Activated CD8-positive, alpha-beta memory T cell treated with anti-CD3 and anti-CD28 coated beads, Interleukin-2, amount 10 ng/mL, durations not matched to agents 7 days and 5 days (primary cell): ENCODE measurements at regions of chr11 and their contacts with region 1.

Region 1: DNA sequence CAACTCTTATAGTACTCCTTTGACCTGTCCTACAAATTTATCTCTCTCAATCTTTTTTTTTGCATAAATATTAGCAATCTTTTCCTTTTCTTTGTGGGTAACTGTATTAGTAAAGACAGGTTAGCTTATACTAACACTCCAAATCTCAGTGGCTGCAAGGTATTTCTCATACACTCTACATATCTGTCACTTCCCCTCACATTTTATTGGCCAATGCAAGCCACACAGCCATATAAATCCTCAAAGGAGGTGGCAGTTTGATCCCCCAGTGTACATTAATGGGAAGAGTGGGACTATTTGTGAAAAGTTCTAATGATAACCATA is 42.6 kb upstream of the EED start:
- DNase-seq: peak; percentile 57
- ATAC-seq: peak; percentile 81
- H3K4me3 Mint-ChIP-seq: no peak overlapping the region
- H3K27ac Mint-ChIP-seq: no peak overlapping the region
- H3K4me1 Mint-ChIP-seq: peaks cover under 1% of the 10 kb centered on the region
- H3K27me3 Mint-ChIP-seq: no peaks in the 10 kb centered on the region

Region 2: GRCh38 chr11:86134580-86135318 is 67.2 kb before region 1 on chr11:
- CTCF ChIA-PET with region 1: no interaction called
- DNase-seq: no peak
- ATAC-seq: no peak
- H3K4me3 Mint-ChIP-seq: no peak overlapping the region
- H3K27ac Mint-ChIP-seq: no peak overlapping the region
- H3K4me1 Mint-ChIP-seq: peaks cover 24% of the 10 kb centered on the region
- H3K27me3 Mint-ChIP-seq: no peaks in the 10 kb centered on the region

Region 3: DNA sequence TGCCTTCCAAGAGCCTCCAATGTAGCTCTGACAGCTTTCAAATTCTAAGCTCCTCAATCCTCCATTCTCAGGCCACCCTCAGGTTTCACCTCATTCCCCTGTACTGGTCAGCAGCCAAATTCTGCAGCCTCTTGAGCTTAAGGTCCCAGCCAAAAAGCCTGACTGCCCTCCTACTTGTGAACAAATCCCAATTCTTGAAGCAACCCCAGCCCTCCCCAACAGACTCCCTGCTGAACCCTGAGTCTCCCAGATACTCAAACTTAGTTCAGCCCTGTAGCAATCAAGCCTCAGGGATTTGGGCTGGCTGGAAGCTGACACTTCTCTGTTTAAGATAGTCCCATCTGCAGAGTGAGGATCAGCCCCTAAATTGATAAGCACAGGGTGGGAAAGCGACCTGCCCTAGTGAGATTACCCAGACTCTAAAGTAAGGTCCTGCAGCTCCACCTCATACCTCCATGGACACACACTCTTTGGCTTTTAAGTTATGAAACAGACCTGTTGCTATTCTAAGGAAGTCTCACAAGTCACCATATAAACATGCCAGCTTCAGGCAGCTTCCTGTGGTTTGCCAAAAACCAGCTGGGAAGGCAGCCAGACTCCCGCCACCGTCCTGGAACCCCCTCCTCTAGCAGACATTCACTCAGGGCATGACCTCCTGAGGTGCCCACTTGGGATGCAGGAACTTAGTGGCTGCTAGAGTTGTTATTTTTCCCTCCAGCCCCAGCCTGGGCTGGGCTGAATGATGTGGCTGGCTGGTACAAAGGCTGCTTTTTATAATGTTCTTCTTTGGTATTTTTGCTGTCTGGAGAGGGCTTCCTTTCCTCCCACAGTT is 50.6 kb before region 1 on chr11:
- CTCF ChIA-PET with region 1: no interaction called
- DNase-seq: no peak
- ATAC-seq: peak; percentile 63
- H3K4me3 Mint-ChIP-seq: no peak overlapping the region
- H3K27ac Mint-ChIP-seq: peak overlapping the region; percentile 61
- H3K4me1 Mint-ChIP-seq: peaks cover 33% of the 10 kb centered on the region
- H3K27me3 Mint-ChIP-seq: no peaks in the 10 kb centered on the region

Region 4: GRCh38 chr11:86218125-86219084 is 16.4 kb after region 1 on chr11:
- CTCF ChIA-PET with region 1: interaction called, 16 read pairs
- DNase-seq: peak; percentile 77
- ATAC-seq: peak; percentile 87
- H3K4me3 Mint-ChIP-seq: peak overlapping the region; percentile 61
- H3K27ac Mint-ChIP-seq: peak overlapping the region; percentile 61
- H3K4me1 Mint-ChIP-seq: peaks cover 35% of the 10 kb centered on the region
- H3K27me3 Mint-ChIP-seq: no peaks in the 10 kb centered on the region

Region 5: DNA sequence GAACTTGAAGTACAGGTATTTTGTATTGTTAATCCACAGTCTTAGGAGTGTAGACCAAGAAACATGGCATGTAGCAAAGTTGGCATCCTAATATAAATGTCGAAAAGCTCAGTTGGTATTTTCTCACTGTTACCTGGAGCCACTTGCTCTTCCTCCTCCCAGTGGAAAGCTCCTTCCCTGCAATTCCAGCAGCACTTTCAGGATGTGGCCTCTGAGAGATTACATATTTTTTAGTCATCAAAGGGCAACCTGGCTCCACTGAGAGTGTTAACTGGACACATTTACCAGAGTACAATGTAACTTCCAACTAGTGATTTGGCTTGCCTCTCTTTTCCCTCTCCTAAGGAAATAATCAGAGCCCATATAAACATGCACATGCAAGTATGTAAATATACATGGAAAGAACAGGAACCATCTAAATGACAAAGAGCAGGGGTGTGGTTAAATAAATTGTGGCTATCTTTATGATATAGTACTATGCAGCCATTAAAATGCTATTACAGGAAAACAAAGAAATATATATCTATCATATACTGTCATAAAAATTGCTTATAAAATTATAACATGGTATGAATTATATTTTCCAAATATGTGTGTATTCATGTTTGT is 28.3 kb after region 1 on chr11:
- CTCF ChIA-PET with region 1: no interaction called
- DNase-seq: no peak
- ATAC-seq: no peak
- H3K4me3 Mint-ChIP-seq: no peak overlapping the region
- H3K27ac Mint-ChIP-seq: no peak overlapping the region
- H3K4me1 Mint-ChIP-seq: peaks cover 31% of the 10 kb centered on the region
- H3K27me3 Mint-ChIP-seq: peaks cover 4% of the 10 kb centered on the region

Region 6: GRCh38 chr11:86431258-86431657 is 229.3 kb after region 1 on chr11:
- CTCF ChIA-PET with region 1: no interaction called
- DNase-seq: no peak
- ATAC-seq: no peak
- H3K4me3 Mint-ChIP-seq: peak overlapping the region; percentile 49
- H3K27ac Mint-ChIP-seq: peak overlapping the region; percentile 62
- H3K4me1 Mint-ChIP-seq: no peaks in the 10 kb centered on the region
- H3K27me3 Mint-ChIP-seq: peaks cover 19% of the 10 kb centered on the region